ENCODE measurements at regions of chr19 and their contacts with region 1.

Region 1: DNA sequence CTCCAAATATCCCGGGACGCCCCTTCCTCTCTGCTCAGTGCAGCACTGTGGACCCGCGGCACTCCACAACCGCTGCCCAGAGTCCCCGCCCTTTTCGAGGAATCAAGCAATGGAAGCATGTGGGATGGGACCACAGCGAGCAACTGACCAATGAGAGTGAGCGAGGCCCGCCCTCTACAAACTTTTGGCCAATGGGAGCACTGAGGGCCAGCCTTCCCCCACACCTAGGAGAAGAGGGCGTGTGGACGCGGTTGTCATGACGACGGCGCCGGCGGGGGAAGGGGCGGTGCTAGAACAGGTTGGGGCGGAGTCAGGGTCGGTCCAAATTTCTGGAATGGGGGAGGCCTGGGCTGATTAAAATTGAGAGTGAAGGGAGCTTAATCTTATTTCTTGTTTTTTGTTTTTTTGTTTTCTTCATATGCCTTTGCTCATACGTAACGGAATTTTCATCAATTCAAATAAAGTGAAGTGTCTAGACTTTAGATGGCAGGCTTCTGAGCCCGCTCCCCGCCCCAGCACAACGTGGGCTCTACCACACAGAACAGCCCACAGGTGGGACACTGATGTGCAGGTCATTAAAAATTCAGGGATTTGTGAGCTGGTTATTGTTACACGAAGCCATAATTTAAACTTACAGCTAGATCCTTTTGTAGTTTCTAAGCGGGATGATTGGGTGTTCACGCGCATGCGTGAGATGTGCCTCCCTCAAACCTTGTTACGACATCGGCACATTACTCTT is at the start of gene DNAAF3:
- DNase-seq: peak; percentile 97
- H3K4me3 ChIP-seq: peak within 1 kb of the TSS; percentile 49 to 67 (median 61)
- H3K27ac ChIP-seq: peak within 1 kb of the TSS; percentile 69
- H3K4me1 ChIP-seq: peaks cover 9% of the 10 kb centered on the region
- H3K27me3 ChIP-seq: peaks cover 2% of the 10 kb centered on the region
- CTCF ChIP-seq: no peak
- total RNA-seq, gene DNAAF3: 1.5 to 2.2 TPM

Region 2: GRCh38 chr19:55270172-55270942 is 103.7 kb after region 1 on chr19:
- CTCF ChIA-PET with region 1: no interaction called
- dilution Hi-C with region 1: no loop called
- in situ Hi-C with region 1: no loop called
- intact Hi-C with region 1: no loop called
- DNase-seq: no peak
- H3K4me3 ChIP-seq: no peak overlapping the region
- H3K27ac ChIP-seq: no peak overlapping the region
- H3K4me1 ChIP-seq: no peaks in the 10 kb centered on the region
- H3K27me3 ChIP-seq: no peaks in the 10 kb centered on the region
- CTCF ChIP-seq: no peak

Region 3: GRCh38 chr19:55674841-55675660 is 508.4 kb after region 1 on chr19 and contains the start of gene EPN1:
- CTCF ChIA-PET with region 1: interaction called, 15 read pairs
- dilution Hi-C with region 1: no loop called
- in situ Hi-C with region 1: no loop called
- intact Hi-C with region 1: no loop called
- DNase-seq: peak; percentile 95
- H3K4me3 ChIP-seq: peak within 1 kb of the TSS; percentile 77 to 87 (median 78)
- H3K27ac ChIP-seq: peak within 1 kb of the TSS; percentile 69
- H3K4me1 ChIP-seq: peaks cover 31% of the 10 kb centered on the region
- H3K27me3 ChIP-seq: no peaks in the 10 kb centered on the region
- CTCF ChIP-seq: no peak
- total RNA-seq, gene EPN1: 47.0 to 135 TPM